ENCODE measurements at regions of chr5 and their contacts with region 1.

Region 1: GRCh38 chr5:158553195-158553961 is 546.3 kb downstream of the EBF1 start:
- DNase-seq: no peak
- ATAC-seq: no peak
- H3K4me3 ChIP-seq: no peak overlapping the region
- H3K27ac ChIP-seq: no peak overlapping the region
- H3K4me1 ChIP-seq: no peaks in the 10 kb centered on the region
- H3K27me3 ChIP-seq: no peaks in the 10 kb centered on the region
- CTCF ChIP-seq: no peak
- EP300 ChIP-seq: no peak
- POLR2A ChIP-seq: no peak
- RAD21 ChIP-seq: no peak

Region 2: GRCh38 chr5:158485604-158486081 is 67.7 kb before region 1 on chr5:
- CTCF ChIA-PET with region 1: no interaction called
- POLR2A ChIA-PET with region 1: no interaction called
- in situ Hi-C with region 1: no loop called
- intact Hi-C with region 1: no loop called
- DNase-seq: no peak
- ATAC-seq: no peak
- H3K4me3 ChIP-seq: no peak overlapping the region
- H3K27ac ChIP-seq: no peak overlapping the region
- H3K4me1 ChIP-seq: no peaks in the 10 kb centered on the region
- H3K27me3 ChIP-seq: no peaks in the 10 kb centered on the region
- CTCF ChIP-seq: no peak
- EP300 ChIP-seq: no peak
- POLR2A ChIP-seq: no peak
- RAD21 ChIP-seq: no peak

Region 3: DNA sequence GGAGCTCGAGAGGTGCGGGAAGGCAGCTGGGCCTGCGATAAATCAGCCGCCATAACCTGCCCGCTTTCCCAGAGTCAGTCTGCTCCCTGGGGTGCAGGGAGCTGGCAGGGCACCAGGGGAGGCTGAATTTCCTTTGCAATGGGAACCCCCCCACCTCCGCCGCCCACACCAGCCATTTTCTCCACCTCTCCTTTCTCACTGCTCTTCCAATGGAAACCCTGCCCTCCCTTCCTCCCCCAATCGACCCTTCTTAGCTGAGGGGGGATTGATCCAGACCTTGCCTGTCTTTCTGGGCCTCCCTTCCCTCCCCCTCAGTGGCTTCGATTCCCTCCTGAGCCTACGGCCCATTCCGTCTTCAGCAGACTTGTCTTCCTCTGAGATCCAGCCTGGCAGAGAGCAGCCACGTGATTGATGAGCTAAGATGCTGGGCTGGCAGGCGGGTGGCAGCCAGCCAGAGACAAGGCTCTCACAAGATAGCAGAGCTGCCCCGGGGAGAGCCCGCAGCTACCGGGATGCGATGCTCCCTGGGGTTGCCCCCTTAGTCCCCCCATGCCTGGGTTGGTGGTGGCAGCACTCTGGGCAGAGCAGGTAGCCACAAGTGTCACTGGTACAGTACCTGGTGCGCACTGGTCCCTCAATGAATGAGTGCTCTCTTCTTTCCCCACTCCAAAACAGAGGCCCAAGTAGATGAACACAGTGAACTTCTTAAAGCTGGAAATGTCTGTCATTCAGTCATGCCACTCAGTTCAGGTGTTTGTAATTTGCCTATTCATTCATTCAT is 1622.2 kb after region 1 on chr5:
- CTCF ChIA-PET with region 1: no interaction called
- POLR2A ChIA-PET with region 1: no interaction called
- in situ Hi-C with region 1: loop called (anchors 10 kb)
- intact Hi-C with region 1: no loop called
- DNase-seq: no peak
- ATAC-seq: no peak; the same call in 2 of the 3 replicates
- H3K4me3 ChIP-seq: no peak overlapping the region
- H3K27ac ChIP-seq: no peak overlapping the region
- H3K4me1 ChIP-seq: no peaks in the 10 kb centered on the region
- H3K27me3 ChIP-seq: peaks cover 14 to 42% of the 10 kb centered on the region in 2 experiments; a peak in 3 of 5 replicates
- CTCF ChIP-seq: no peak
- EP300 ChIP-seq: no peak
- POLR2A ChIP-seq: no peak
- RAD21 ChIP-seq: no peak